Caco-2 (cell line): ENCODE measurements at regions of chr7 and their contacts with region 1.

Region 1: DNA sequence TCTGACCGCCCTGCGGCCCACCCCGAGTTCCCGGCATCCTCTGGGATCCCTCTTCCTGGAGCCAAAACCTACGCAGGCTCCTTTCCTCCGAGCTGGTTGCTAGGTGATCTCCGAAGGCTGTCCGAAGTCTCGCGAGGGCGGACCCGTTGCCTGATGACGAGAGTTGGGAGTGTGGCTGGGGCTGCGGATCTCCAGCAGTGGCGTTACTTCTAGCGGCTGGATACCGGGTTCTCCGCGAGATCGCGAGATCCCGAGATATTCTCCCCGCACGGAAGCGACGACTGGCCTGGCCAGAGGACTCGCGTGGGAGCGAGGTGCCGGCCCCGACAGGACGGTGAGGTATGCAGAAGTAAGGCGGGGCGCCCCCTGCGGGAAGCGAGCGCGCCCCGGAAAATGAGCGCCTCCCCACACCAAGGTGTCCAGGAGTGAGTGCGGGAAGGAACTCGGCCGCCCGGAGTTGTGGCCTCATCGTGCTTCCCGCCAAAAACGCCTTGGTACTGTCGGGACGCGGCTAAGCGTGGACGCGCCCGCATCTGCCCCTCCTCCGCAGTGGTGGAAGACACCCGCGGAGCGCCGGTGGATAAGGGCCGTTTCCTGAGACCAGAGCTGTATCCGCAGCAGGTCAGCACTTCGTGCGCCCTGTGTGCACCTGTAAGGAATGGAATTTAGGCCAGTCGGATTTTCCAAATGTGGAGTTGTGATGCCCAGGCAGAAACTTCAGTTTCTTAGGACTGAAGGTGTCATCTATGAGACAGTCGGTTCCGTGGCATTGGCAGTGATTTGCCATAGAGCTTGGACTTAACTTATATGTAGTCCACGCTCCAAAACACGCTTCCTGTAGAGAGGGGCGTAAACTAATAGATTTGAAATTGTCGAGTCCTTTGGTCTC is at the start of gene AGBL3:
- DNase-seq: peak; percentile 97 to 98
- H3K4me3 ChIP-seq: peak within 1 kb of the TSS; percentile 81
- H3K4me3 Mint-ChIP-seq: peak within 1 kb of the TSS; percentile 99
- H3K27ac Mint-ChIP-seq: peak within 1 kb of the TSS; percentile 100
- H3K4me1 ChIP-seq: peaks cover 35% of the 10 kb centered on the region
- H3K4me1 Mint-ChIP-seq: peaks cover 20% of the 10 kb centered on the region
- H3K27me3 ChIP-seq: no peaks in the 10 kb centered on the region
- H3K27me3 Mint-ChIP-seq: no peaks in the 10 kb centered on the region
- CTCF ChIP-seq: peak; percentile 72 to 78
- total RNA-seq, gene AGBL3: 5.3 and 6.1 TPM in 2 replicates

Region 2: DNA sequence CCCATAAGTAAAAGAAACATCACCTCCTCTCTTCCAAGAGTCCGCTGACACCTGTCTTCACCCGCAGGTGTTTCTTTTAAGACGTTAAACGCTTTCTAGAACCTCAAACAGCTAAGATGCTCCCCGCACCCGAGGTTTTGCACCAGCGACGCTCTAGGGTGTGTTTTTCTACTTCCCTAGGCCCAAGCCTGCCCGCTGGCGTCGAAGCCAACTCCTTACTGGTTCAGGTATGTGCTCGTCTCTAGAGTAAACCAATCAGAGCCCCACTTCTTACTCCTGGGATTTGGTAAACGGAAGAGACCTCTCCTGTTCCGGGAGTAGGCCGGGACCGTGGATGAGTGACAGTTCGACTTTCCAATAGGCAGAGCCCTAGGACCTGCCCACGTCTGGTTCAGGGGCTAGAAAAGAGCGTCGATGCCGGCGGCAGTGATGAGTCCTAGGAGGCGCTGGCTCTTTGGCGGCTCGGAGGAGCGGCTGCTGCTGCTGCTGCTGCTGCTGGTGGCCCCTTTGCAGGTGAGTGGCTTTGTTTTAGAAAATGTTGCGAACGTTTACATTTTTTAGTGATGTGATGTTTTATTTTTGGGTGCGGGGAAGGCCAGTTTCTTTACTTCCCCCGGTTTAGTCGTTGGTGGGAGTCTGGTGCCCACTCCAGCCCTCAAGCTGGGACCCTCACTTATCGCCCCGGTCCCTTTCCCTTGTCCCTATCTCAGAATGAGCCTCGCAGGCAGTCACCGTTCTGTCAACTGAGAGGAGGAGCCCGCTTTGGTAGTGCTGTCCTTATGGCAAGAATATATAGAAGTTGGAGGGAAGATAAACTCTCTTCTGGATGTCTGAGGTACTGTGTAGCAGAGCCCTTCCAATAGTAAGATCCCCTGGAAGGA is 339.9 kb before region 1 on chr7 and contains the start of gene BPGM:
- CTCF ChIA-PET with region 1: no interaction called
- POLR2A ChIA-PET with region 1: no interaction called
- intact Hi-C with region 1: loop called (anchors 1 kb)
- DNase-seq: peak; percentile 99 to 100
- H3K4me3 ChIP-seq: peak within 1 kb of the TSS; percentile 64
- H3K4me3 Mint-ChIP-seq: no peak within 1 kb of the TSS
- H3K27ac Mint-ChIP-seq: no peak within 1 kb of the TSS
- H3K4me1 ChIP-seq: 0 out of 2 replicates have a peak, but pooled peaks cover 4% of the 10 kb centered on the region
- H3K4me1 Mint-ChIP-seq: peaks cover 4% of the 10 kb centered on the region
- H3K27me3 ChIP-seq: no peaks in the 10 kb centered on the region
- H3K27me3 Mint-ChIP-seq: no peaks in the 10 kb centered on the region
- CTCF ChIP-seq: peak in 1 of 2 experiments; percentile 38
- total RNA-seq, gene BPGM: 7.2 and 8.1 TPM in 2 replicates

Region 3: GRCh38 chr7:134943764-134944400 is 42.7 kb before region 1 on chr7:
- CTCF ChIA-PET with region 1: no interaction called
- POLR2A ChIA-PET with region 1: no interaction called
- intact Hi-C with region 1: no loop called
- DNase-seq: peak in 1 of 2 experiments; percentile 53
- H3K4me3 ChIP-seq: no peak overlapping the region
- H3K4me3 Mint-ChIP-seq: no peak overlapping the region
- H3K27ac Mint-ChIP-seq: no peak overlapping the region
- H3K4me1 ChIP-seq: peaks cover 62% of the 10 kb centered on the region
- H3K4me1 Mint-ChIP-seq: peaks cover 69% of the 10 kb centered on the region
- H3K27me3 ChIP-seq: no peaks in the 10 kb centered on the region
- H3K27me3 Mint-ChIP-seq: no peaks in the 10 kb centered on the region
- CTCF ChIP-seq: peak; percentile 59 to 64

Region 4: GRCh38 chr7:135147899-135148721 is 161.5 kb after region 1 on chr7 and contains the start of gene TMEM140:
- CTCF ChIA-PET with region 1: interaction called, 4 read pairs
- POLR2A ChIA-PET with region 1: interaction called, 4 read pairs
- intact Hi-C with region 1: loop called (anchors 1 kb)
- DNase-seq: peak; percentile 63 to 74
- H3K4me3 ChIP-seq: peak within 1 kb of the TSS; percentile 33
- H3K4me3 Mint-ChIP-seq: peak within 1 kb of the TSS; percentile 79
- H3K27ac Mint-ChIP-seq: peak within 1 kb of the TSS; percentile 86
- H3K4me1 ChIP-seq: peaks cover 14% of the 10 kb centered on the region
- H3K4me1 Mint-ChIP-seq: peaks cover 21% of the 10 kb centered on the region
- H3K27me3 ChIP-seq: no peaks in the 10 kb centered on the region
- H3K27me3 Mint-ChIP-seq: no peaks in the 10 kb centered on the region
- CTCF ChIP-seq: no peak
- total RNA-seq, gene TMEM140: 3.8 and 6.1 TPM in 2 replicates